Breast epithelium (tissue), 4 donors: ENCODE measurements at regions of chr14 and their contacts with region 1.

Region 1: DNA sequence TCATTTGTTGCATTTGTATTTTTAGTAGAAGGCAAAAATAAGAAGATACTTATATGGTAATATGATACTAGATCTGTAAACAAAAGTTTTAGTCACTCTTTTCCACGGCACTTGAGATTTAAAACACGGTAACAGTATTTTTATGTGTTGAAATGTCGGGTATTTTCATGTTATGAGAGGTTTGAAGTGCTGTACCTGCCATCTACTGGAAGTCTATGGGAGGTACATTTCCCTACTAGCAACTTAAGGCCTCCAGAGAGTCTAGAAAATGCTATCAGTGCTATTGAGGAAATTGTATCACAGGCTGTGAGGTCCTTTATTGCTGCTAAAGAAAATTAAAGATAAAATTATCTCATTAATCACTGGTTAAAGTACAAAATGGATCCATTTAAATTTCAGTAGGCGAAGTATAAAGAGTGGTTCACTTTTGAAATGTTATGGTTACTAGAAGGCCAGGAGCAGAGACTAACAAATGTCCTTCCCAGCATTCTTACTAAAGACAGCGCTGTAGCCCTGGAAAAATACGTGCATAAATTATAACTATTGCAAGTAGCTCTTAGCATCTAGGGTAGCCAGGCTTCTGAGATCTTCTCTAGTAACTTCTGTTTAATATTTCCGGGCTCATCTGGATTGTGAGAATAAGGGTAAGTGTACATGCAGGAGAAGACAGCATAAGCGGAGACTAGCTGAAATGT is 77.6 kb upstream of the PRKD1 start:
- DNase-seq: no peak
- H3K4me3 ChIP-seq: no peak overlapping the region
- H3K27ac ChIP-seq: no peak overlapping the region
- H3K4me1 ChIP-seq: no peaks in the 10 kb centered on the region
- H3K27me3 ChIP-seq: no peaks in the 10 kb centered on the region
- CTCF ChIP-seq: peak in 2 of 3 donors; percentile 58 to 72
- POLR2A ChIP-seq: no peak

Region 2: GRCh38 chr14:29558516-29558915 is 446.7 kb before region 1 on chr14:
- intact Hi-C with region 1: loop called (anchors 10 kb)
- DNase-seq: no peak
- H3K4me3 ChIP-seq: no peak overlapping the region
- H3K27ac ChIP-seq: no peak overlapping the region
- H3K4me1 ChIP-seq: no peaks in the 10 kb centered on the region
- H3K27me3 ChIP-seq: no peaks in the 10 kb centered on the region
- CTCF ChIP-seq: no peak
- POLR2A ChIP-seq: no peak

Region 3: GRCh38 chr14:30064454-30064853 is 59.2 kb after region 1 on chr14:
- intact Hi-C with region 1: no loop called
- DNase-seq: no peak
- H3K4me3 ChIP-seq: no peak overlapping the region
- H3K27ac ChIP-seq: no peak overlapping the region
- H3K4me1 ChIP-seq: no peaks in the 10 kb centered on the region
- H3K27me3 ChIP-seq: no peaks in the 10 kb centered on the region
- CTCF ChIP-seq: no peak
- POLR2A ChIP-seq: no peak